Right cardiac atrium (tissue), 5 donors: ENCODE measurements at regions of chr18 and their contacts with region 1.

Region 1: GRCh38 chr18:58781627-58782194 is 83.0 kb upstream of the ZNF532 start:
- DNase-seq: peak; percentile 76 to 88 (median 77)
- ATAC-seq: peak; percentile 86 to 91
- H3K4me3 ChIP-seq: no peak overlapping the region
- H3K27ac ChIP-seq: no peak overlapping the region
- H3K4me1 ChIP-seq: peaks cover 6% of the 10 kb centered on the region
- H3K27me3 ChIP-seq: no peaks in the 10 kb centered on the region

Region 2: GRCh38 chr18:58863539-58864145 is 81.9 kb after region 1 on chr18:
- intact Hi-C with region 1: loop called in 2 of 4 experiments (anchors 10 kb)
- DNase-seq: peak; percentile 68 to 89 (median 86)
- ATAC-seq: peak; percentile 64 to 66
- H3K4me3 ChIP-seq: peak overlapping the region; percentile 73
- H3K27ac ChIP-seq: peak overlapping the region; percentile 97
- H3K4me1 ChIP-seq: peaks cover 20% of the 10 kb centered on the region
- H3K27me3 ChIP-seq: no peaks in the 10 kb centered on the region

Region 3: DNA sequence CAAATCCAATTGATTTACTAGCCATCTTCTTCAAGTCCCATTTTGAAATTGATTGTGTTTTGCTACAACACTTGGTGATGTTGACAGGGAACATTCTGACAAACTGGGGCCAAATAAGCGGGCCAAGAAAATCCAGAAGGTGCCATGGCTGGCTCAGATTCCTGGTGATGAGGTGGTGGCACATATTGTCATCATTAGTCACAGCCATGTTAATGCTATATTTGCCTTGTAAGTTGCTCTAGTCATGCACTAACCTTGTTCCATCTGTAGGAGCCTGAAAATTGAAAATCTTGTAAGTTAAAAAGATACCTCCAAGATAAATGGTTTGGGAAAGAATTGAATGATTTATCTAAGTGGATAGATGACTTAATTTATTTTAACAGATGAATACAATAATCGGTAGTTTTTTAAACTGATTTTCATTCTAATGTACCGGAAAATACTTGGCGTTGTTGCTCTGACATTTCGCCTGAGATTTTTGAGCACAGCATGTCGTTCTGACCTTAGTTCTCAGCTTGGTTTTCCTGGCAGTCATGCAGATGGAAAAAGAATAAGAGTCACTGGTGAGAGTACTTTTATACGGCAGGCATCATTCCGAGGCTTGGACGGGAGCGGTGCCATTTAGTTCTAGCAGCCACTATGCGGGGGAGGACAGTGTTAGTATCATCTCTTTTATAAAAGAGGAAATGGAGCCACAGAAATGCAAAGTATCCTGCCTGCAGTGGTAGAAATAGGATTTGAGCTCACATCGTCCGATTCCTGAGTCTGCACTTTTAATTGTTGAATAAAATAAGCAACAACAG is 216.9 kb after region 1 on chr18:
- intact Hi-C with region 1: loop called in 1 of 4 experiments (anchors 10 kb)
- DNase-seq: peak; percentile 75 to 88 (median 78)
- ATAC-seq: peak; percentile 82 to 84
- H3K4me3 ChIP-seq: no peak overlapping the region
- H3K27ac ChIP-seq: peak overlapping the region; percentile 91
- H3K4me1 ChIP-seq: peaks cover 2% of the 10 kb centered on the region
- H3K27me3 ChIP-seq: no peaks in the 10 kb centered on the region

Region 4: GRCh38 chr18:59056706-59057492 is 275.2 kb after region 1 on chr18:
- intact Hi-C with region 1: loop called in 3 of 4 experiments (anchors 2 to 5 kb)
- DNase-seq: peak; percentile 70 to 90 (median 84)
- ATAC-seq: peak; percentile 20 to 71
- H3K4me3 ChIP-seq: no peak overlapping the region
- H3K27ac ChIP-seq: no peak overlapping the region
- H3K4me1 ChIP-seq: peaks cover 2% of the 10 kb centered on the region
- H3K27me3 ChIP-seq: no peaks in the 10 kb centered on the region

Region 5: DNA sequence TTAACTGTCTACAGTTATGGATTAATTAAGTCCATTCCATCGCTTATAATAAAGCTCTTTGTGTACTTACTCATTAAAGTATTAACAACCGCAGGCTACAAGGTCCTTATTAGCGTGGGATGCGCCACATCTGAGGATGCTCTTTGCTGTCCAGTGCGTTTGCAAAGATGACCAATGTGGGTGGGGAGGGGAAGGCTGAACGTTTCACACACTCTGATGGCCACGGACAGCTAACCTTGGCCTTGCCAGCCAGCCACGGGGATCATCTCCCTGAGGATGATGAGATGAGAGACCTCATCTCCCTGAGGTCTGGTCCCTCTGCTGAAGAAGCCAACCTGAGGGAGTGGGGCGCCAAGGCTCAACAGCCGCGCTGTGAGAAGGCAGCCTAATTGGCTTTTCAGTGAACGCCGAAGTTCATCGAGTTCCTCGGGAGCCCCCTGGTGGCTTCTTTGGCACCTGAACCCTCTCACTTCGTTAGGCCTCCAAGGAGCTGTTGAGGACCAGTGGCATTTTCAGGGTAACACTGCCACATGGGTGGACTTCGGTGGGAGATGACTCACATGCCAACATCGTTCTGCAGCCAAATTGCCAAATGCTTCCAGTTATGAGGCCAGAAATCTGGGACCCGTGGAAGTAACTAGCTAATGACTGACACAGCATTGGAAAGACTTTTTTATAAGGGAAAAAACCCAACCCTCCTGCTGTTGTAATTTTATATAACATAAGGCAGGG is 288.6 kb after region 1 on chr18:
- intact Hi-C with region 1: loop called in 2 of 4 experiments (anchors 2 kb)
- DNase-seq: peak; percentile 85 to 95 (median 90)
- ATAC-seq: peak; percentile 83 to 87
- H3K4me3 ChIP-seq: no peak overlapping the region
- H3K27ac ChIP-seq: no peak overlapping the region
- H3K4me1 ChIP-seq: no peaks in the 10 kb centered on the region
- H3K27me3 ChIP-seq: no peaks in the 10 kb centered on the region